Posterior vena cava (tissue), 2 donors: ENCODE measurements at regions of chr4 and their contacts with region 1.

Region 1: GRCh38 chr4:159764343-159764952 is 661.6 kb downstream of the RAPGEF2 start:
- DNase-seq: no peak

Region 2: GRCh38 chr4:159266981-159267868 is 497.2 kb before region 1 on chr4:
- intact Hi-C with region 1: loop called in 1 of 2 experiments (anchors 5 kb)
- DNase-seq: no peak

Region 3: DNA sequence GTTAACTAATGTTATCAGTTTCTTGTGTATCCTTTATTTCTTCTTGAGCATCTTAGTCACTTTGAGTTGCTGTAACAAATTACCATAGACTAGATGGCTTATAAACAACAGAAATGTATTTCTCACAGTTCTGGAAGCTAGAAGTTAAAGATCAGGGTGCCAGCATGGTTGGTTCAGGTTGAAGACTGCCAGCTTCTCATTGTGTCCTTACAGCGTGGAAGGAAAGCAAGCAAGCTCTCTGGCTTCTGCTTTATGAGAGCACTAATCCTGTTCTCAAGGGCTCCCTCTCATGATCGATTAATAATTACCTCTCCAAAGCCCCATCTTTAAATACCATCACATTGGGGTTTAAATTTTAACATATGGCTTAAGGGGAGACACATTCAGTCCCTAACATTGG is 164.4 kb before region 1 on chr4:
- intact Hi-C with region 1: no loop called
- DNase-seq: no peak